CD4-positive, alpha-beta memory T cell (primary cell): ENCODE measurements at regions of chr2 and their contacts with region 1.

Region 1: DNA sequence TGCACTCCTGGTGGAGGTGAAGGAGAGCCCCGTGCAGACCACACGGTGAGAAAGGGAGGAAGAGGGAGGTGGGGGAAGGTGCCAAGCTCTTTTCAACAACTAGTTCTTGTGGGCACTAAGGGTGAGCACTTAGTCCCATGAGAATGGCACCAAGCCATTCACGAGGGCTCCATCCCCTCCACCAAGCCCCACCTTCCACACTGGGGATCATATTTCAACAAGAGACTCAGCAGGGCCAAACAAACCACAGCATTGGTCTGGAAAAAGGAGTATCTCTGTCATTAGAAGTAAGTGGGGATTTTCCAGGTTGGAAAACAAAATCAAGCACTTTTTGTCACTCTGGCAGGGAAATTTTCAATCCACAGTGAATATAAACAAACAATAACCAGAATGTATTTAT is 38.4 kb downstream of the ZAP70 start:
- DNase-seq: no peak
- H3K4me3 ChIP-seq: no peak overlapping the region
- H3K4me3 Mint-ChIP-seq: no peak overlapping the region
- H3K27ac ChIP-seq: no peak overlapping the region
- H3K27ac Mint-ChIP-seq: peak overlapping the region in 4 of 7 donors; percentile 7 to 88 (median 43)
- H3K4me1 ChIP-seq: peaks cover 19% of the 10 kb centered on the region
- H3K4me1 Mint-ChIP-seq: peaks cover 13 to 23% (median 16%) of the 10 kb centered on the region in 4 donors
- H3K27me3 ChIP-seq: no peaks in the 10 kb centered on the region
- H3K27me3 Mint-ChIP-seq: no peaks in the 10 kb centered on the region

Region 2: GRCh38 chr2:96065381-96065930 is 1686.3 kb before region 1 on chr2:
- CTCF ChIA-PET with region 1: no interaction called
- POLR2A ChIA-PET with region 1: no interaction called
- intact Hi-C with region 1: loop called (anchors 10 kb)
- DNase-seq: peak in 1 of 5 donors; percentile 13
- H3K4me3 ChIP-seq: no peak overlapping the region
- H3K4me3 Mint-ChIP-seq: no peak overlapping the region
- H3K27ac ChIP-seq: no peak overlapping the region
- H3K27ac Mint-ChIP-seq: no peak overlapping the region
- H3K4me1 ChIP-seq: no peaks in the 10 kb centered on the region
- H3K4me1 Mint-ChIP-seq: no peaks in the 10 kb centered on the region
- H3K27me3 ChIP-seq: no peaks in the 10 kb centered on the region
- H3K27me3 Mint-ChIP-seq: no peaks in the 10 kb centered on the region

Region 3: GRCh38 chr2:97710596-97711386 is 41.0 kb before region 1 on chr2:
- CTCF ChIA-PET with region 1: interaction called, 198 read pairs
- POLR2A ChIA-PET with region 1: interaction called, 284 read pairs
- intact Hi-C with region 1: loop called (anchors 1 kb)
- DNase-seq: peak in 1 of 5 donors; percentile 71
- H3K4me3 ChIP-seq: no peak overlapping the region
- H3K4me3 Mint-ChIP-seq: peak overlapping the region in 6 of 8 donors; percentile 3 to 97 (median 16)
- H3K27ac ChIP-seq: peak overlapping the region; percentile 31
- H3K27ac Mint-ChIP-seq: peak overlapping the region; percentile 69 to 95 (median 86)
- H3K4me1 ChIP-seq: peaks cover 57% of the 10 kb centered on the region
- H3K4me1 Mint-ChIP-seq: peaks cover 34 to 60% (median 45%) of the 10 kb centered on the region in 4 donors
- H3K27me3 ChIP-seq: no peaks in the 10 kb centered on the region
- H3K27me3 Mint-ChIP-seq: no peaks in the 10 kb centered on the region

Region 4: DNA sequence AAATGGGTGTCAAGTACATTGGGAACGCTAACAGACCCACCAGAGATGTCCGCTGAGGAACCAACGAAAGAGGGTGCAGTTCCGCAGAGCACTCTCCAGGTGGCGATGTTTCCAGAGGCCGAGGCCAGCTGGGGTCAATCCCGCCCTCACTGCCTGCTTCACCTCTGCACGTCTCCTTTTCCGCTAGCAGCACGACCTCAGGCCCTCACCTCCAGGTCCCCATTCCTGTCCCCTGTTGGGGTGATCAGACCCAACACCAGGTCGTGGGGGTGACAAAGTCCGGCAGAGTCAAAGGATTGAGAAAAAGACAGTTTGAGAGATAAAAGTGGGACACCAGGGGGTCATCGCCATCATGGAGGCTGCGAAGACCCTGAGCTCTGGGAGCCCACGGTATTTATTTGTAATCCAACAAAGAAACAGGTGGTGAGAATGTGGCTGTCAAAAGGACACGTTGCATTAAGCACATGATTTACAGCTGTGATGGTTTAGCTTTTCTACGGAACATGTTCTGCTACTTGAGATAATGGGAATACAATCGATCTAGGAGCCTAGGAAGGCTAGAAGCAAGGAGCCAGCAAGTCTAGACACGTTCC is 11.1 kb before region 1 on chr2:
- CTCF ChIA-PET with region 1: interaction called, 12 read pairs
- POLR2A ChIA-PET with region 1: interaction called, 3 read pairs
- intact Hi-C with region 1: no loop called
- DNase-seq: peak in 4 of 5 donors; percentile 31 to 43 (median 34)
- H3K4me3 ChIP-seq: no peak overlapping the region
- H3K4me3 Mint-ChIP-seq: peak overlapping the region in 3 of 8 donors; percentile 20 to 61 (median 50)
- H3K27ac ChIP-seq: no peak overlapping the region
- H3K27ac Mint-ChIP-seq: peak overlapping the region; percentile 25 to 90 (median 79)
- H3K4me1 ChIP-seq: peaks cover 55% of the 10 kb centered on the region
- H3K4me1 Mint-ChIP-seq: peaks cover 42 to 77% (median 57%) of the 10 kb centered on the region in 4 donors
- H3K27me3 ChIP-seq: no peaks in the 10 kb centered on the region
- H3K27me3 Mint-ChIP-seq: no peaks in the 10 kb centered on the region